ENCODE measurements at regions of chr14 and their contacts with region 1.

Region 1: DNA sequence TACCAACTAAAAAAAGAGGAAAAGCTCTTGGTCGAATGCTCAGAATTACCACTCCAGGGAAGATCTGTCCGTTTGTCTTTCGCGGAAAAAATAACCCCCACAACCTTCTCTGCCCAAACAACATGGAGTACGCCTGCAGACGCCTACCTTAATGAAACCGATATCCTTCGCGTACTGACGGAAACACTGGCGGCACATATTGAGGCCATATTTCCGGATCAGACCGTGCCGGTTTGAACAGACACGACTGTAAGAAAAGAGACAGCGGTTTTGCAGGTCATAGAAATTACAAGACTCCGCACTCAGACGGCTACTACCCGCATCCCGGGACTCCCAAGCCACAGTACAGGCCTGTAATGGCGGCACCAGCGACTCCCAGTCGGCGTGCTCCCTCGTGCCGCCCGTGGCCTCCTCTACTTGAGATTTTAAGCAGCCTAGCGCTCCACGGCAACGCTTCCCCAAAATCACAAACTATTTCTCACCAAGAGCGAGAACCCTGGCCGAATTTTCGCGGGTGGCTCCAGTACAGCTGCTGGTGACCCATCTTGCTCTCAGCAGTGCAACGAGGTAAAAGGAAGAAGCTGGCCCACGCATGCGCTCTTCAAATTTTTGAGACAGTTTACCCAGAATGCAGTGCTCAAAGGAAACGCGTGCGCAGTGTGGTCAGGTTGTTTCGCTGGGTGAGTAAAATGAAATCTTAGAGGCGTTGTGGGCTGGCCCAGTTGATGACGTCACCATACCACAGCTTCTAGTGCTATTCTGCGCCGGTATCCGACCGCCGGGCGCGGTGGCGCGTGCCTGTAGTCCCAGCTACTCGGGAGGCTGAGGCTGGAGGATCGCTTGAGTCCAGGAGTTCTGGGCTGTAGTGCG is at the start of gene RPS29:
- DNase-seq: peak; percentile 100
- ATAC-seq: peak; percentile 83 to 95 (median 85)
- H3K4me3 ChIP-seq: peak within 1 kb of the TSS; percentile 87
- H3K4me3 Mint-ChIP-seq: peak within 1 kb of the TSS; percentile 98
- H3K27ac ChIP-seq: peak within 1 kb of the TSS; percentile 96
- H3K27ac Mint-ChIP-seq: peak within 1 kb of the TSS; percentile 98 to 99
- H3K4me1 ChIP-seq: peaks cover 19% of the 10 kb centered on the region
- H3K4me1 Mint-ChIP-seq: peaks cover 44 to 54% of the 10 kb centered on the region in 2 donors
- H3K27me3 ChIP-seq: no peaks in the 10 kb centered on the region
- H3K27me3 Mint-ChIP-seq: no peaks in the 10 kb centered on the region
- CTCF ChIP-seq: no peak
- total RNA-seq, gene RPS29: 1,124 to 1,711 (median 1,654) TPM

Region 2: GRCh38 chr14:48670939-48671338 is 915.1 kb before region 1 on chr14:
- intact Hi-C with region 1: no loop called
- DNase-seq: no peak
- ATAC-seq: no peak
- H3K4me3 ChIP-seq: no peak overlapping the region
- H3K4me3 Mint-ChIP-seq: no peak overlapping the region
- H3K27ac ChIP-seq: no peak overlapping the region
- H3K27ac Mint-ChIP-seq: no peak overlapping the region
- H3K4me1 ChIP-seq: no peaks in the 10 kb centered on the region
- H3K4me1 Mint-ChIP-seq: no peaks in the 10 kb centered on the region
- H3K27me3 ChIP-seq: no peaks in the 10 kb centered on the region
- H3K27me3 Mint-ChIP-seq: no peaks in the 10 kb centered on the region
- CTCF ChIP-seq: no peak

Region 3: GRCh38 chr14:49598485-49599300 is 12.7 kb after region 1 on chr14 and contains the start of gene LRR1:
- intact Hi-C with region 1: loop called (anchors 1 kb)
- DNase-seq: peak; percentile 87 to 90
- ATAC-seq: peak; percentile 86 to 95 (median 90)
- H3K4me3 ChIP-seq: peak within 1 kb of the TSS; percentile 83
- H3K4me3 Mint-ChIP-seq: peak within 1 kb of the TSS; percentile 98
- H3K27ac ChIP-seq: peak within 1 kb of the TSS; percentile 94
- H3K27ac Mint-ChIP-seq: peak within 1 kb of the TSS; percentile 97 to 98
- H3K4me1 ChIP-seq: peaks cover 22% of the 10 kb centered on the region
- H3K4me1 Mint-ChIP-seq: peaks cover 24 to 26% of the 10 kb centered on the region in 2 donors
- H3K27me3 ChIP-seq: no peaks in the 10 kb centered on the region
- H3K27me3 Mint-ChIP-seq: no peaks in the 10 kb centered on the region
- CTCF ChIP-seq: no peak
- total RNA-seq, gene LRR1: 8.1 to 11.7 (median 8.7) TPM

Region 4: GRCh38 chr14:49614196-49614595 is 28.2 kb after region 1 on chr14:
- intact Hi-C with region 1: no loop called
- DNase-seq: no peak
- ATAC-seq: no peak
- H3K4me3 ChIP-seq: no peak overlapping the region
- H3K4me3 Mint-ChIP-seq: no peak overlapping the region
- H3K27ac ChIP-seq: no peak overlapping the region
- H3K27ac Mint-ChIP-seq: no peak overlapping the region
- H3K4me1 ChIP-seq: peaks cover 6% of the 10 kb centered on the region
- H3K4me1 Mint-ChIP-seq: peaks cover 12% of the 10 kb centered on the region in 2 donors
- H3K27me3 ChIP-seq: no peaks in the 10 kb centered on the region
- H3K27me3 Mint-ChIP-seq: no peaks in the 10 kb centered on the region
- CTCF ChIP-seq: no peak

Region 5: GRCh38 chr14:50363714-50364111 is 777.7 kb after region 1 on chr14:
- intact Hi-C with region 1: loop called (anchors 10 kb)
- DNase-seq: peak; percentile 30 to 80
- ATAC-seq: peak; percentile 67 to 84 (median 70)
- H3K4me3 ChIP-seq: peak overlapping the region; percentile 44
- H3K4me3 Mint-ChIP-seq: peak overlapping the region; percentile 89
- H3K27ac ChIP-seq: peak overlapping the region; percentile 91
- H3K27ac Mint-ChIP-seq: peak overlapping the region; percentile 92 to 93
- H3K4me1 ChIP-seq: peaks cover 64% of the 10 kb centered on the region
- H3K4me1 Mint-ChIP-seq: peaks cover 50 to 55% of the 10 kb centered on the region in 2 donors
- H3K27me3 ChIP-seq: no peaks in the 10 kb centered on the region
- H3K27me3 Mint-ChIP-seq: no peaks in the 10 kb centered on the region
- CTCF ChIP-seq: no peak